GM23248 (cell line): ENCODE measurements at regions of chr7 and their contacts with region 1.

Region 1: DNA sequence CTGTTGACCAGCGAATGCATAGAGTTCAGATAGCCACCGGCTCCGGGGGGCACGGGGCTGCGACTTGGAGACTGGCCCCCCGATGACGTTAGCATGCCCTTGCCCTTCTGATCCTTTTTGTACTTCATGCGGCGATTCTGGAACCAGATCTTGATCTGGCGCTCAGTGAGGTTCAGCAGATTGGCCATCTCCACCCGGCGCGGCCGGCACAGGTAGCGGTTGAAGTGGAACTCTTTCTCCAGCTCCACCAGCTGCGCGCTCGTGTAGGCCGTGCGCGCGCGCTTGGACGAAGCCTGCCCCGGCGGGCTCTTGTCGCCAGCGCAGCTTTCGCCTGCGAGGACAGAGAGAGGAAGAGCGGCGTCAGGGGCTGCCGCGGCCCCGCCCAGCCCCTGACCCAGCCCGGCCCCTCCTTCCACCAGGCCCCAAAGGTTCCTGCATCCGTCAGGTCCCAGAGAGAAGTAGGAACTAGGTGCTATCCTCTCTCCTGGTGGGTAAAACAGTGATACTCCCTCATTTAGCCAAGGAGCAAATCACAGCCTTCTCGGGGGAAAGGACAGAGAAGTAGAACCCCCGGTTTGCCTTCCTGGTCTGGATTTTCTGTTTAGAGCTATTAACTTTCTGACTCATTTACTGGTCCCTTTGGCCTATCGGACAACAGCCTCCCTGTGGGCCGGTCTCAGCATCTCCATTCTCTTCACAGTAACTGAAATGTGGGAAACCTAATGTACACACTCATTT is 6.1 kb upstream of the HOXA2 start:
- DNase-seq: peak; percentile 17
- H3K4me3 ChIP-seq: no peak overlapping the region
- H3K27ac ChIP-seq: no peak overlapping the region
- H3K4me1 ChIP-seq: peaks cover 7% of the 10 kb centered on the region; the same call in 1 of the 2 replicates
- H3K27me3 ChIP-seq: no peaks in the 10 kb centered on the region

Region 2: GRCh38 chr7:26034391-26034790 is 1074.2 kb before region 1 on chr7:
- in situ Hi-C with region 1: no loop called
- DNase-seq: no peak
- H3K4me3 ChIP-seq: no peak overlapping the region
- H3K27ac ChIP-seq: no peak overlapping the region
- H3K4me1 ChIP-seq: no peaks in the 10 kb centered on the region
- H3K27me3 ChIP-seq: no peaks in the 10 kb centered on the region

Region 3: DNA sequence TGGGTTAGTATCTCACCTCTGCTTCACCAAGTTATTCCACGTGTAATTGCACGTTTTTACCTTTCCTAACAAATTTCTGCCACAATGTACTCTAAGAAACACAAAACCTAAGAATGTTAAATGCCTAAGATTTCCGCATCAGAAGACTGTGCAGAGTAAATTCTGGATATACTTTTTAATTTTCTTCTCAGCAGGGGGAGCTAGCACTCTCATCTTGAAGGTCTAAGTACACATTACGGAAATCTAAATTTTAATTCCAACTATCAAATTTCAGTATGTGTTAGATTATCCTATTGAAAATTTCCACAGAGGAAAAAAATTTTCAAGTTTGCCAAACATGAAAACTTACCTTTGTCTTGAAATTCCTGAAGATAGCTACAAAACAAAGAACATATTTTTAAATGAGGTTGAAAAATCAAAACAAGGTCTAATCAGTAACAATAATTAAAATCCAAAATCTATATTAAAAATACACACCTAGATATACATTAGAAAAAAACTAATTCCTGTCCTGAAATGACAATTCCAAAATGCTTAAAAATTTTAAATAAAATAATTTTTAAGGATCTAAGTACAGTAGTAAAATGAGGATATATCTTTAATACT is 254.7 kb before region 1 on chr7:
- in situ Hi-C with region 1: loop called (anchors 10 kb)
- DNase-seq: peak; percentile 74
- H3K4me3 ChIP-seq: no peak overlapping the region
- H3K27ac ChIP-seq: no peak overlapping the region
- H3K4me1 ChIP-seq: peaks cover 13% of the 10 kb centered on the region; the same call in 1 of the 2 replicates
- H3K27me3 ChIP-seq: no peaks in the 10 kb centered on the region